SK-N-SH (cell line): ENCODE measurements at regions of chr5 and their contacts with region 1.

Region 1: GRCh38 chr5:138464008-138464387 is 1.3 kb upstream of the EGR1 start:
- DNase-seq: peak; percentile 95
- H3K4me3 ChIP-seq: peak overlapping the region; percentile 81 to 83
- H3K27ac ChIP-seq: peak overlapping the region; percentile 96 to 99
- H3K4me1 ChIP-seq: peaks cover 9 to 19% of the 10 kb centered on the region in 2 experiments; a peak in 1 of 4 replicates
- H3K27me3 ChIP-seq: no peaks in the 10 kb centered on the region
- CTCF ChIP-seq: peak; percentile 85
- EP300 ChIP-seq: no peak
- RAD21 ChIP-seq: peak; percentile 64

Region 2: GRCh38 chr5:138491669-138492559 is 27.9 kb after region 1 on chr5:
- CTCF ChIA-PET with region 1: interaction called, 196 read pairs
- POLR2A ChIA-PET with region 1: interaction called, 22 read pairs
- DNase-seq: peak; percentile 92
- H3K4me3 ChIP-seq: peak overlapping the region; percentile 47 to 61
- H3K27ac ChIP-seq: peak overlapping the region; percentile 25 to 85; a peak in 3 of 4 replicates
- H3K4me1 ChIP-seq: peaks cover 6 to 37% of the 10 kb centered on the region in 2 experiments; a peak in 2 of 4 replicates
- H3K27me3 ChIP-seq: no peaks in the 10 kb centered on the region
- CTCF ChIP-seq: no peak
- EP300 ChIP-seq: no peak
- RAD21 ChIP-seq: no peak

Region 3: GRCh38 chr5:138508963-138509362 is 45.0 kb after region 1 on chr5:
- CTCF ChIA-PET with region 1: interaction called, 196 read pairs
- POLR2A ChIA-PET with region 1: interaction called, 22 read pairs
- DNase-seq: no peak
- H3K4me3 ChIP-seq: no peak overlapping the region
- H3K27ac ChIP-seq: no peak overlapping the region
- H3K4me1 ChIP-seq: peaks cover 0 to 6% of the 10 kb centered on the region in 2 experiments; a peak in 1 of 4 replicates
- H3K27me3 ChIP-seq: no peaks in the 10 kb centered on the region
- CTCF ChIP-seq: no peak
- EP300 ChIP-seq: no peak
- RAD21 ChIP-seq: no peak

Region 4: DNA sequence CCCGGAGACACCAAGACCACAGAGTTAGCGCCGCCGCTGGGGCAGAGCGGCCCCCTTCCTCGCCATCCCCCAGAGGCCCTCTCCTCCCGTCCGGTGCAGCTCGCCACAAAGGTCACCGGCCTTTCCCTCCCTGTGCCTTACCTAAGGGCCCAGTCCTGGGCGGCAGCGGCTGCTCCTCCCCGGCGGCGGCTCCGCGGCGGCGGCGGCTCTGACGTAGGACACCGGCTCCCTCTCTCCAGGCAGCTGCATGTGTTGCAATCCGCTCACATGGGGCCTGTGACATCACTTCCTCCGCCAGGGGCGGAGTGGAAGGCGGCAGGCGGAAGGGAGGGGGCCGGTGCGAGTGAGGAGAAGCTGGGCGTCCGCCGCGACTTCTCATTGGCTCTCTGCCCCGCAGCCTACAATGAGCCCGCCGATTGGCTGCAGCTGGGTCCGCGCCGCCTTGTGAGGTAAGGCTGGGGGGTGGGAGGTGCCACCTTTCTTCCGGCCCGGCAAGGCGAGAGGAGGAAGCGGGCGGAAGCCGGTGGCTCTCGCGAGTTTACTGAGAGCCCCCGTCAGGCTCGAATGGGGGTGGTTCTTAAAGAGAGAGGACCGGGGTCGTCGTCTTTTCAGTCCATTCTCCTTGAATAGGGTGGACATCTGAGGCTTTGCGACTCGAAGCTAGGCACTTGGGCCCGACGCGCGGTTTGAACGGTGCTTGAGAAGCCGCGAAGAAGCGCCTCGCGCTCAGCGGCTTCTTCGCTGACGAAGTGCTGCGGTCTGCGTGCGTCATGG is 79.1 kb after region 1 on chr5 and contains the start of gene ETF1:
- CTCF ChIA-PET with region 1: interaction called, 10 read pairs
- POLR2A ChIA-PET with region 1: interaction called, 12 read pairs
- DNase-seq: peak; percentile 97
- H3K4me3 ChIP-seq: peak within 1 kb of the TSS; percentile 88 to 91
- H3K27ac ChIP-seq: peak within 1 kb of the TSS; percentile 96 to 97
- H3K4me1 ChIP-seq: peaks cover 18 to 25% of the 10 kb centered on the region in 2 experiments
- H3K27me3 ChIP-seq: no peaks in the 10 kb centered on the region
- CTCF ChIP-seq: no peak
- EP300 ChIP-seq: peak in 1 of 2 experiments; percentile 28; a peak in 1 of 4 replicates
- RAD21 ChIP-seq: no peak
- polyA plus RNA-seq, gene ETF1: 36.7 and 48.7 TPM in 2 replicates